ENCODE measurements at regions of chr1 and their contacts with region 1.

Region 1: DNA sequence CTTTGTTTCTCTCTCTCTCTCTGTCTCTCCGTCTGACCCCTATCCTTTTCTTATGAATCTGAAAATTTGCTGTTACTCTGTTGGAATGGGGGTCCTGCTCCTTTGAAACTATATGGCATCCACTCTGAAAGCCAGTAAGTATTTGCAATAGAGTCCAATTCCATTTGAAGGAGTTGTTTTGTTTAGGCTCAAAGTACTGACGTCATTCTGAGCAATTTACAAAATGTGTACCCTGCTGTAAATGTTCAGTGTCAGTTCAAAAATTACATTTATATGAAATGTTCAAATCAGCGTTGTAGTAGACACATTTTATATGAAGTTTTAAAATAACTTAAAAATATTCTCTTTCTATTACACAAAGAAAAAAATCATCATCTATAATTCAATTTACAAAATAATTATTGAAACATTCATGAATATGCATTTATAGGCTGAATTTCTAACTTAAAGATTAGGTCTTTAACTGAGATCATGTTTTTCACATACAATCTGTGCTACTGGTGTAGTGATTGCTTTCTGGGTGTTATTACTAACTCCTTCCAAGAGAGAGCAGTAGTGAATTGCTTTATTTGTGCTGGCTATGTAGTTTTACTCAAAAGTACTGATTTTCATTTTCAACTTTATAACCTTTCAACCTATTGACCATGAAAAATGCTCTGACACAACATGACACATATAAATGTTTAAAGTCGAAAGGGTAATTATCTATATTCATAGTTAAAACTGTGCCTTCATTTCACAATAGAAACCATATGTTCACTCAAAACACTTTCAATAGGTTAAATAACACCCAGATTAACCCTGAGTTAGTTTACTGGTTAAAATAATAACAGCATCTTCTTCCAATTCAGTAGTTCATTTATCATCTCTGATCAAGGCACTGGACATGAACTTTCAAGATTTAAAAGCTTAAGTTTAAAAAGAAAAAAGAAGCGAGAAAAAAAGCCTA is 253.1 kb upstream of the ADGRL4 start:
- ATAC-seq: peak in 6 of 8 experiments; percentile 43 to 74 (median 66)
- H3K4me3 ChIP-seq: no peak overlapping the region
- H3K27ac ChIP-seq: no peak overlapping the region
- H3K4me1 ChIP-seq: no peaks in the 10 kb centered on the region

Region 2: GRCh38 chr1:79353224-79353623 is 93.6 kb after region 1 on chr1:
- in situ Hi-C with region 1: loop called in 2 of 9 experiments (anchors 10 to 25 kb)
- ATAC-seq: peak in 4 of 8 experiments; percentile 38 to 97 (median 90)
- H3K4me3 ChIP-seq: no peak overlapping the region
- H3K27ac ChIP-seq: no peak overlapping the region
- H3K4me1 ChIP-seq: no peaks in the 10 kb centered on the region

Region 3: DNA sequence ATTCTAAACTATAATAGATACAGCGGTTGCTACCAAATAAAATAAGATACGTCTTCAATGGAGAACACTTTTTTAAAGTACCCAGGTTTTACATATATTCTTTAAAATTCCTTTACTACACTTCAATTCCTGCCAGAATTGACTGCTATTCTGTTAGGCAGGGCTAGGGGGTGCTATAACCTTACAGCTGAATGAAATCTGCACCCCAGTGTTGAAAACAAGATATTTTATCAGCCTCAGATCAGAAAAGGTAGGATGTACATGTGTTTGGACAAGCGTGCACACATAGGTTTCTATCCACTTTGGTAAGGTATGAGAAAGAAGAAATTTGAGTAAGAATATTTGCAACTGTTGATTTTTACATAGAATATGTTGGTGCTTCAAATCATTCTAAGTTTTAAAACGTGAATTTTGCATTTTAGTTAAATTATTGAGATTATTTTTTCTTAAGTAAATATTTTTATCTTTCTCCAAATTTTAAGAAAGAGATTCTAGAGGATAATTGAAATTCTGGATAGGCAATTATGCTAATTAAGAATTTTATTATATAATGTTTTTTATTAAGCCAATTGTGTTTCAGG is 237.6 kb after region 1 on chr1:
- in situ Hi-C with region 1: loop called in 2 of 9 experiments (anchors 25 kb)
- ATAC-seq: peak in 4 of 8 experiments; percentile 21 to 46 (median 28)
- H3K4me3 ChIP-seq: no peak overlapping the region
- H3K27ac ChIP-seq: no peak overlapping the region
- H3K4me1 ChIP-seq: peaks cover 21 to 24% of the 10 kb centered on the region in 2 donors

Region 4: DNA sequence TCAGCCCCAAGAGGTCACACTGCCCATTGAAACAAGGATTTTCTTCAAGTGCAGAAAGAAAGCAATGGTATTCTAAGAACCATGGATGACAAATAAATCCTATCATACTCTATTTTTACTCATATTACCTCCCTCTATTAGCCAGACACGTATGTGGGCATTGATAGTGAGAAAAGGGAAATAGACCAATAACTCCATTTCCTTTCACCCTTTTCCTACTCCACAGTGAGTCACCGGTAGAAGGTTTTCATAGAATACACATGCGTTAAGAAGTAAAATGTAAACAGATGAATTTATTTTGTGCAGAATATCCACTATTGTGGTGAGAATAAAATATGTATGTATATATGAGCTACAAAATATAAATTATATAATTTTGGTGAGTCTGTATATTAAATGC is 315.8 kb after region 1 on chr1:
- in situ Hi-C with region 1: no loop called
- ATAC-seq: no peak
- H3K4me3 ChIP-seq: no peak overlapping the region
- H3K27ac ChIP-seq: no peak overlapping the region
- H3K4me1 ChIP-seq: no peaks in the 10 kb centered on the region

Measured in motor neuron (in vitro differentiated cells).